Heart right ventricle (tissue), 16 donors: ENCODE measurements at regions of chr10 and their contacts with region 1.

Region 1: DNA sequence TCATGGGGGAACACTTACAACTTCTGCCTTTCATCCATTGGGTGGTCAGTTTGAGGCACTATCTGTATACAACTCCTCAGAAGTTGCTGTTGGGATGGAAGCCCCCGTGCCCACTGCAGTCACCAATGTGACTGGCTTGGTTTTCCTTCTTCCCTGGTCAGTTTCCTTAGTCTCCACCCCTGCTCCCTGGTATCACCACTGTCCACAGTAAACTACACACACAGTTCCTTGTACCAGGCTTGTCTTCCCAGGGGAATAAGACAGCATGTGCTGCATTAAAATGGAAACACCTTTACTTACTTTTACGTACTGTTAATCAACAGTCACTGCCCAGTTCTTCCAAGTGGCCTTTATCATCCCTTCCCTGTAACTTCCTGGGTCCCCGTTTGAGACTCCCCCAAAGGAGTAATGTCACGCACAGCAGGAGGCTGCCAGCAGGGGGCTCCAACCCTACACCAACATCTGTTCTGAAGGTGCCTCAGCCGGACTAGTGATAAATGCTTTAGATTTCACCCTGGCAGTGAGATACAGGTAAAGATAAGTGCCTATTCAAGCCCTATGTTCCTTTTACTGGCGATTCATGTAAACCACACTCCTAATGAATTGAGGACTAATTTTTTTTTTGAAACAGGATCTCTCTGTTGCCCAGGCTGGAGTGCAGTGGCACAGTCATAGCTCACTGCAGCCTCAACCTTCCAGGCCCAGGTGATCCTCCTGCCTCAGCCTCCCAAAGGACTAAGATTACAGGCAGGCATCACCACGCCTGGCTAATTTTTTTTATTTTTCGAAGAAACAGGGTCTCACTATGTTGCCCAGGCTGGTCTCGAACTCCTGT is 45.3 kb upstream of the PIK3AP1 start:
- DNase-seq: peak; percentile 48 to 69
- ATAC-seq: peak in 5 of 8 donors; percentile 60 to 69 (median 66)
- H3K4me3 ChIP-seq: no peak overlapping the region
- H3K27ac ChIP-seq: no peak overlapping the region
- H3K4me1 ChIP-seq: peaks cover 0 to 5% (median 0%) of the 10 kb centered on the region in 9 donors
- H3K27me3 ChIP-seq: peaks cover 0 to 5% (median 0%) of the 10 kb centered on the region in 7 donors
- CTCF ChIP-seq: peak; percentile 51 to 85 (median 74)

Region 2: GRCh38 chr10:96586419-96587263 is 179.0 kb before region 1 on chr10 and contains the start of gene TM9SF3:
- intact Hi-C with region 1: no loop called
- DNase-seq: peak; percentile 94 to 95
- ATAC-seq: peak; percentile 91 to 96 (median 94)
- H3K4me3 ChIP-seq: peak within 1 kb of the TSS; percentile 69 to 98 (median 93)
- H3K27ac ChIP-seq: peak within 1 kb of the TSS; percentile 92 to 100 (median 98)
- H3K4me1 ChIP-seq: peaks cover 0 to 66% (median 56%) of the 10 kb centered on the region in 9 donors
- H3K27me3 ChIP-seq: no peaks in the 10 kb centered on the region
- CTCF ChIP-seq: peak in 4 of 9 donors; percentile 12 to 30 (median 28)
- total RNA-seq, gene TM9SF3: 50.7 to 83.9 (median 62.4) TPM

Region 3: GRCh38 chr10:96664563-96664962 is 101.1 kb before region 1 on chr10:
- intact Hi-C with region 1: no loop called
- DNase-seq: no peak
- ATAC-seq: peak in 3 of 8 donors; percentile 17 to 78 (median 63)
- H3K4me3 ChIP-seq: no peak overlapping the region
- H3K27ac ChIP-seq: no peak overlapping the region
- H3K4me1 ChIP-seq: peaks cover 0 to 28% (median 0%) of the 10 kb centered on the region in 9 donors
- H3K27me3 ChIP-seq: no peaks in the 10 kb centered on the region
- CTCF ChIP-seq: no peak

Region 4: GRCh38 chr10:96747734-96748550 is 17.7 kb before region 1 on chr10:
- intact Hi-C with region 1: no loop called
- DNase-seq: no peak
- ATAC-seq: no peak
- H3K4me3 ChIP-seq: no peak overlapping the region
- H3K27ac ChIP-seq: peak overlapping the region in 1 of 10 donors; percentile 72
- H3K4me1 ChIP-seq: peaks cover 0 to 24% (median 0%) of the 10 kb centered on the region in 9 donors
- H3K27me3 ChIP-seq: no peaks in the 10 kb centered on the region
- CTCF ChIP-seq: no peak

Region 5: DNA sequence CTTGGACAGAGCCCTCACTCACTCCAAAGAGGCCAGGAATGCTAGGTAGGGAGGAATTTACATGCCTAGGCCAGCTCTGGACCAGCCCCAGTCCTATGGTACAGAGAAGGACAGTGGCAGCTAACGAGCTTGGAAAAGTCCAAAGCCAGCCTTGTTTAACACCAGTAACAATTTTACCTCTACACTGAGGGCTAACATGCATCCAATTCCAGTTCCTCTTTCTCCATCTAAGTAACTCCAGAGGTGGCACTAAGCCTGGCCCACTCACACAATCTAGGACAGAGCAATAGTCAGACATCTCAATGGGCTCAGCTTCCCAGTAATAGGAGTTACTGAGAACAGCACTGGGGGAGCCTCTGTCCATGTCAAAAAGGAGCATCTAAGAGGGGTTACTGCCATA is 60.8 kb after region 1 on chr10:
- intact Hi-C with region 1: loop called in 2 of 10 experiments (anchors 5 to 10 kb)
- DNase-seq: no peak
- ATAC-seq: no peak
- H3K4me3 ChIP-seq: no peak overlapping the region
- H3K27ac ChIP-seq: no peak overlapping the region
- H3K4me1 ChIP-seq: peaks cover 0 to 18% (median 6%) of the 10 kb centered on the region in 9 donors
- H3K27me3 ChIP-seq: no peaks in the 10 kb centered on the region
- CTCF ChIP-seq: no peak

Region 6: GRCh38 chr10:97016728-97017473 is 251.3 kb after region 1 on chr10:
- intact Hi-C with region 1: loop called in 3 of 10 experiments (anchors 5 to 10 kb)
- DNase-seq: no peak
- ATAC-seq: no peak
- H3K4me3 ChIP-seq: no peak overlapping the region
- H3K27ac ChIP-seq: no peak overlapping the region
- H3K4me1 ChIP-seq: peaks cover 0 to 21% (median 14%) of the 10 kb centered on the region in 9 donors
- H3K27me3 ChIP-seq: no peaks in the 10 kb centered on the region
- CTCF ChIP-seq: no peak

Region 7: GRCh38 chr10:97037365-97038361 is 272.0 kb after region 1 on chr10:
- intact Hi-C with region 1: loop called in 1 of 10 experiments (anchors 5 kb)
- DNase-seq: peak; percentile 63 to 83
- ATAC-seq: peak; percentile 88 to 98 (median 92)
- H3K4me3 ChIP-seq: peak overlapping the region in 9 of 10 donors; percentile 22 to 58 (median 44)
- H3K27ac ChIP-seq: peak overlapping the region in 1 of 10 donors; percentile 36
- H3K4me1 ChIP-seq: peaks cover 5 to 12% (median 9%) of the 10 kb centered on the region in 9 donors
- H3K27me3 ChIP-seq: no peaks in the 10 kb centered on the region
- CTCF ChIP-seq: peak; percentile 75 to 91 (median 85)